ENCODE measurements at regions of chr11 and their contacts with region 1.

Region 1: DNA sequence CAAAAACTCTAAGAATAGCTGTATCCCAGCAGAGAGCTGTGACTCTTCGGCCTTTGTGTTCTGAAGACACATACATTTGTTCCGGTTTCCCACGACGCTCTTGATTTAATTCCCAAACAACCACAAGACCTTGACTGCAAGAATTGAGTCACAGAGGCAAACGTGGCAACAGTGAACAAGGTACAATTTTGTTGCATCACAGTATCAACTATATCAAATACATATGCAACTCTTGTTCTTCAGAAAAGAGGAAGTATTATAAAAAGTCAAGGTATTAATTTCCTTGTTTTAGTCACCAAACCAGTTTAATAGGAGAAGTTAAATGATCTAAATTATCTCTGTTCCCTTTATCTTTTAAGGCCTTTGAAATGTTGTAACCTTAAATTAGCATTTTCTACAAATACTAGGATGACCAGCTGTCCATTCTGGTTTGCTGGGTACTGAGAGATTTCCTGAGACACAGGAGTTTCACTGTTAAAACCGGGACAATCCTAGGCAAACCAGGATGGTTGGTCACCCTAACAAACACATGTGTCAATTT is 11.1 kb downstream of the HPS5 start:
- DNase-seq: no peak
- H3K4me3 ChIP-seq: no peak overlapping the region
- CTCF ChIP-seq: no peak

Region 2: DNA sequence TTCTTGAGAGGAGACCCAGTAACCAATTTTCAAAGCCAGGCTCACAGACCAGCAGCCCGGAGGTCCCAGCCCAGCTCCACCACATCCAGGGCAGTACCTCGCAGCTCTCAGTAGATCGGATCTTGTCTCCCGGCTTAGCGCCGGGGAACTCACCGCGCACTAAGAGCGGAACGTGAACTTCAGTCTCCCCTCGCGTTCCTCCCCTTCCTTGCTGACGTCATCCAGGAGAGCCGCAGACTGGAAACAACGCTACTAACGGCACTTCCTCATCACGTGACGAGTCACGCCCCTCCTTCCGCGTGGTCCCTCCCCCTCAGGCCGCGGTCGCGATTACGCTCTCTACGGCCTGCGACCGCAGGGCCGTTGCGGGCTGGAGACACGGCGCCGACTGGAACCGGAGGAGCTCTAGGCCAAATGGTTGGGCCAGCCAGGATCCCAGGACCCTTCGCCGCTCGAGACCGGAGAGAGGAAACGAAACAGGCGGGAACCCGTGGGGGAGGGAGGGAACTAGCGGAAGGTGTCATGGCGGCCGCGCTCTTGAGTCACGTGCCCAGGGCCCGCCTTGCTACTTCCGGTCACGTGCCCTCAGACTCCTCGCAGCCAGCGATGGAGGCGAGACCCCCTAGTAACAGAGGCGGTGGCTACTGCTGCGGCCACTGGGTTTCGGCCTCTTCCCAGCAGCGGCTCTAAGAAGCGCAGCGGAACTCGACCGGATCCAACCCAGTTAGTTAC is 11.3 kb after region 1 on chr11 and contains the starts of genes GTF2H1 and HPS5:
- CTCF ChIA-PET with region 1: no interaction called
- POLR2A ChIA-PET with region 1: interaction called, 30 read pairs
- DNase-seq: peak; percentile 91
- H3K4me3 ChIP-seq: peak within 1 kb of the TSS; percentile 94
- CTCF ChIP-seq: no peak

Region 3: DNA sequence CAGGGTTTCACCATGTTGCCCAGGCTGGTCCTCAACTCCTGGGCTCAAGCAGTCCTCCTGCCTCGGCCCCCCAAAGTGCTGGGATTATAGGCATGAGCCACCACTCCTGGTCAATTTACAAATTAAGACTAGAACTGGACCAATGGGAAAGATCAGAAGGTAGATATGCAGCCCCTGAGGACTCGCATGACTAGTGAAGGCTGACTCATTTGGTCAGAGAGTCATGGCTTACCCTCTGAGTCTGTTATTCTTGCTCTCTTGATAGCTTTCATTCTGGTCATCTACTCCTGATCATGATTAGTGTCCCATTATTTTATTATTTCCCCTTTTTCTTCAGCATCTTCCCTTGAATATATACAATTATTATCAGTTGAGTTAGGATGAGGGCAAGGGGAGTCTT is 142.1 kb after region 1 on chr11:
- CTCF ChIA-PET with region 1: no interaction called
- POLR2A ChIA-PET with region 1: no interaction called
- DNase-seq: no peak
- H3K4me3 ChIP-seq: no peak overlapping the region
- CTCF ChIP-seq: no peak